Activated CD4-positive, alpha-beta T cell treated with anti-CD3 and anti-CD28 coated beads for 36 hours (primary cell): ENCODE measurements at regions of chr13 and their contacts with region 1.

Region 1: DNA sequence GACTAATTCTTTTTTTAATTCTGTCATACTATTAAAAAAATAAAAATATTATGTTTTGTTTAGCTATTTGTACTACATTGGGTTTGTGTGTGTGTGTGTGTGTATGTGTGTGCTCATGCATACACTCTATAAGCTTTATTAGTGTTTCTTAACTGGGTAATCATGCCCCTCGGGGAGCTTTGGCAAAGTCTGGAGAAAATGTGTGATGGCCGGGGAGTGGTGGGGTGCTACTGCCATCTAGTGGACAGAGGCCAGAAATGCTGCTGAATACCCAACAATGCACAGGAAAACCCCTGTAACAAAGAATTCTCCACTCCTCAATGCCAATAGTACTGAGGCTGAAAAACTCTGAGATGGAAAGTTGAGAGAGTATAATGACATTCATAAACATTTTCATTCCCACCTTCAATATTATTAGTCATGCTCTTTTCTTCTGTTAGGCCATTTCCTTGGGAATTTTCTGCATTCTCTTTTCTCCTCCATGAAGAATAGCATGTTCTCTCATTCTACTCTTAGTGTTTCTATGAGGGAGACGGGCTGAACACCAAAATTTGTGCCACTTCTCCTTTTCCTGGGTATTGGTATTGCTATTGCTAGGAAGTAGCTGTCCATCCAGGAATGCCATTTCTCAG is 157.3 kb downstream of the DNAJC3 start:
- DNase-seq: peak; percentile 76
- ATAC-seq: peak; percentile 57
- H3K4me3 Mint-ChIP-seq: no peak overlapping the region
- H3K27ac Mint-ChIP-seq: no peak overlapping the region
- H3K4me1 Mint-ChIP-seq: no peaks in the 10 kb centered on the region
- H3K27me3 Mint-ChIP-seq: peaks cover 23% of the 10 kb centered on the region

Region 2: GRCh38 chr13:94389604-94390351 is 1444.5 kb before region 1 on chr13:
- CTCF ChIA-PET with region 1: no interaction called
- POLR2A ChIA-PET with region 1: no interaction called
- intact Hi-C with region 1: no loop called
- DNase-seq: no peak
- ATAC-seq: no peak
- H3K4me3 Mint-ChIP-seq: no peak overlapping the region
- H3K27ac Mint-ChIP-seq: no peak overlapping the region
- H3K4me1 Mint-ChIP-seq: no peaks in the 10 kb centered on the region
- H3K27me3 Mint-ChIP-seq: peaks cover 10% of the 10 kb centered on the region

Region 3: GRCh38 chr13:95191821-95192563 is 642.3 kb before region 1 on chr13:
- CTCF ChIA-PET with region 1: no interaction called
- POLR2A ChIA-PET with region 1: no interaction called
- intact Hi-C with region 1: loop called in 1 of 2 experiments (anchors 5 kb)
- DNase-seq: peak; percentile 85
- ATAC-seq: peak; percentile 91
- H3K4me3 Mint-ChIP-seq: no peak overlapping the region
- H3K27ac Mint-ChIP-seq: no peak overlapping the region
- H3K4me1 Mint-ChIP-seq: peaks cover 9% of the 10 kb centered on the region
- H3K27me3 Mint-ChIP-seq: no peaks in the 10 kb centered on the region

Region 4: DNA sequence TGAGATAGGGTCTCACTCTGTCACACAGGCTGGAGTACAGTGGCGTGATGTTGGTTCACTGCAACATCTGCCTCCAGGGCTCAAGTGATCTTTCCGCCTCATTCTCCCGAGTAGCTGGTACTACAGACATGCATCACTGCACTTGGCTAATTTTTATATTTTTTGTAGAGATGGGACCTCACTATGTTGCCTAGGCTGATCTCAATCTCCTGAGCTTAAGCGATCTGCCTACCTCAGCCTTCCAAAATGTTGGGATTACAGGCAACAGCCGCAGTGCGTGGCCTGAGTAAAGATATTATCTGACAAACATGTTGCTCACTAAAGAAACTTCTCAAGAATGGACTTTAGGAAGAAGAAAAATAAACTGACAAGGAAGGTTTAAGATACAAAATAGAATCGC is 407.6 kb before region 1 on chr13:
- CTCF ChIA-PET with region 1: no interaction called
- POLR2A ChIA-PET with region 1: no interaction called
- intact Hi-C with region 1: no loop called
- DNase-seq: no peak
- ATAC-seq: no peak
- H3K4me3 Mint-ChIP-seq: no peak overlapping the region
- H3K27ac Mint-ChIP-seq: no peak overlapping the region
- H3K4me1 Mint-ChIP-seq: no peaks in the 10 kb centered on the region
- H3K27me3 Mint-ChIP-seq: peaks cover 4% of the 10 kb centered on the region

Region 5: DNA sequence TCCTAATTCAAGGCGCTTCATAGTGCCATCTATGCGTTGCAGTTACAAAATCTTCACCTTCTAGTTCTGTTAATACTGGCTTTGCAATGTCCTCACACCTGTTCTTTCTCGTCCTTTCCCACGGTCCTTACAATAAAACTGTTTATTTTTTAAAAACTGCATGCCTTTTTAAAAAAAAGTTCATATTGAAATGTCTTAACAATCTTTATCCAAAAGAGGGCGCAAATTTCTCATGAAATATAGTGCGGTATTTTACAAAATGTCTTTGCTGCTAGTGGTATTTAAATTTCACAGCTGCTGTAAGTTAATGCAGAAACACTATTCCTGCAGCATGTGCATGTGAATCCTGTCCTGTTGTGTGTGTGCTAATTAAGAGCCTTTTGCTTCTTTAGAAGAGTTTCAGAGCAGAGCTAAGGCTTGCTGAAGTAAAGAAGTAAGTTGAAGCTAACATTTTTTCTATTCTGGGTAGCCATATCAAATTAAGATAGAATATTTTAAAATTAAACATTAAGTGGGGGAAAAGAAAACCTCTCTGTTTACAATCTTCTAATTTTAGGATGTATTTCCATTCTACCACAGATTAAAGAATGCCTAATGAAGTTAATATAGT is 297.5 kb before region 1 on chr13:
- CTCF ChIA-PET with region 1: interaction called, 50 read pairs
- POLR2A ChIA-PET with region 1: no interaction called
- intact Hi-C with region 1: loop called (anchors 1 kb)
- DNase-seq: no peak
- ATAC-seq: no peak
- H3K4me3 Mint-ChIP-seq: no peak overlapping the region
- H3K27ac Mint-ChIP-seq: no peak overlapping the region
- H3K4me1 Mint-ChIP-seq: peaks cover 10% of the 10 kb centered on the region
- H3K27me3 Mint-ChIP-seq: peaks cover 27% of the 10 kb centered on the region

Region 6: DNA sequence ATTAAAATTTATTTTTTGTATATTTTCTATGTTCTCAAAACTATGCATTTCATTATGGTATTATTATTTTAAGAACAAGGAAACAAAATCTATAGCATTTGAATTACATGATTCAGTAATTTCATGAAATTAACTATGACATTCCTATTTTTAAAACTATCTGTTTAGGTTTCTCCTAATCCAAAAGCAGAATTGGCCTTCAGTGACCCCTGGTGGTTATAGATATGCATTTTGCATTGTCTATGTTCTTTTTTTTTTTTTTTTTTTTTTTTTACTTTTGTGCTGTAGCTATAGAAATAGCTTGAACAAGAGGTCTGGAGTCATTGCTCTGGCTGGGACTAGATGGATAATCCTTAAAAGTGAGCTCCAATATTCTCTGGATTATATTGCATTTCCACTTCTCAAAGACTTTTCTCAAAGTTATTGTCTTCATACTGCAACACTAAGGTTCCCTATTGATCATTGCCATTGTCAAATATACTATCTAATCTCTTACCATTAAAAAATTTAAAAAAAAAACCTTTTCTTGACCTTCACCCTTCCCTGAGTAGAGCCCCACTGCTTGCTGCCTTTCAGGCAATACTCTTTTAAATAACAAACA is 173.2 kb before region 1 on chr13:
- CTCF ChIA-PET with region 1: interaction called, 13 read pairs
- POLR2A ChIA-PET with region 1: no interaction called
- intact Hi-C with region 1: loop called in 1 of 2 experiments (anchors 2 kb)
- DNase-seq: peak; percentile 21
- ATAC-seq: no peak
- H3K4me3 Mint-ChIP-seq: no peak overlapping the region
- H3K27ac Mint-ChIP-seq: no peak overlapping the region
- H3K4me1 Mint-ChIP-seq: no peaks in the 10 kb centered on the region
- H3K27me3 Mint-ChIP-seq: peaks cover 19% of the 10 kb centered on the region

Region 7: GRCh38 chr13:95822303-95822702 is 11.9 kb before region 1 on chr13:
- CTCF ChIA-PET with region 1: interaction called, 18 read pairs
- POLR2A ChIA-PET with region 1: no interaction called
- intact Hi-C with region 1: no loop called
- DNase-seq: no peak
- ATAC-seq: no peak
- H3K4me3 Mint-ChIP-seq: no peak overlapping the region
- H3K27ac Mint-ChIP-seq: no peak overlapping the region
- H3K4me1 Mint-ChIP-seq: no peaks in the 10 kb centered on the region
- H3K27me3 Mint-ChIP-seq: peaks cover 5% of the 10 kb centered on the region